ENCODE measurements at regions of chr12 and their contacts with region 1.

Region 1: GRCh38 chr12:40010899-40011774 is 94.7 kb downstream of the SLC2A13 start:
- DNase-seq: peak; percentile 76
- ATAC-seq: peak; percentile 94
- H3K4me3 ChIP-seq: no peak overlapping the region
- H3K27ac ChIP-seq: no peak overlapping the region
- H3K4me1 ChIP-seq: peaks cover 5% of the 10 kb centered on the region
- H3K27me3 ChIP-seq: no peaks in the 10 kb centered on the region
- CTCF ChIP-seq: peak; percentile 93

Region 2: DNA sequence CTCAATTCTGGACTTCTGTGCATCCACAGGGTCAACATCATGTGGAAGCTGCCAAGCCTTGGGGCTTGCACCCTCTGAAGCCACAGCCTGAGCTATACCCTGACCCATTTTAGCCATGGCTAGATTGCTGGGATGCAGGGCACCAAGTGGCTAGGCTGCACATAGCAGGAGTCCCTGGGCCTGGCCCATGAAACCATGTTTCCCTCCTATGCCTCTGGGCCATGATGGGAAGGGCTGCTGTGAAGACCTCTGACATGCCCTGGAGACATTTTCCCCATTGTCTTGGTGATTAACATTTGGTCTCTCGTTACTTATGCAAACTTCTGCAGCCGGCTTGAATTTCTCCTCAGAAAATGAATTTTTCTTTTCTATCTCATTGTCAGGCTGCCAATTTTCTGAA is 484.2 kb before region 1 on chr12:
- CTCF ChIA-PET with region 1: no interaction called
- POLR2A ChIA-PET with region 1: no interaction called
- intact Hi-C with region 1: no loop called
- DNase-seq: no peak
- ATAC-seq: no peak
- H3K4me3 ChIP-seq: no peak overlapping the region
- H3K27ac ChIP-seq: no peak overlapping the region
- H3K4me1 ChIP-seq: no peaks in the 10 kb centered on the region
- H3K27me3 ChIP-seq: no peaks in the 10 kb centered on the region
- CTCF ChIP-seq: no peak

Region 3: GRCh38 chr12:39788235-39788634 is 222.9 kb before region 1 on chr12:
- CTCF ChIA-PET with region 1: no interaction called
- POLR2A ChIA-PET with region 1: no interaction called
- intact Hi-C with region 1: no loop called
- DNase-seq: no peak
- ATAC-seq: no peak; the same call in 1 of the 2 replicates
- H3K4me3 ChIP-seq: no peak overlapping the region
- H3K27ac ChIP-seq: no peak overlapping the region
- H3K4me1 ChIP-seq: no peaks in the 10 kb centered on the region
- H3K27me3 ChIP-seq: no peaks in the 10 kb centered on the region
- CTCF ChIP-seq: no peak

Region 4: GRCh38 chr12:40032433-40033241 is 21.5 kb after region 1 on chr12:
- CTCF ChIA-PET with region 1: interaction called, 3 read pairs
- POLR2A ChIA-PET with region 1: no interaction called
- intact Hi-C with region 1: loop called (anchors 2 kb)
- DNase-seq: no peak
- ATAC-seq: no peak
- H3K4me3 ChIP-seq: no peak overlapping the region
- H3K27ac ChIP-seq: no peak overlapping the region
- H3K4me1 ChIP-seq: no peaks in the 10 kb centered on the region
- H3K27me3 ChIP-seq: no peaks in the 10 kb centered on the region
- CTCF ChIP-seq: no peak

Region 5: DNA sequence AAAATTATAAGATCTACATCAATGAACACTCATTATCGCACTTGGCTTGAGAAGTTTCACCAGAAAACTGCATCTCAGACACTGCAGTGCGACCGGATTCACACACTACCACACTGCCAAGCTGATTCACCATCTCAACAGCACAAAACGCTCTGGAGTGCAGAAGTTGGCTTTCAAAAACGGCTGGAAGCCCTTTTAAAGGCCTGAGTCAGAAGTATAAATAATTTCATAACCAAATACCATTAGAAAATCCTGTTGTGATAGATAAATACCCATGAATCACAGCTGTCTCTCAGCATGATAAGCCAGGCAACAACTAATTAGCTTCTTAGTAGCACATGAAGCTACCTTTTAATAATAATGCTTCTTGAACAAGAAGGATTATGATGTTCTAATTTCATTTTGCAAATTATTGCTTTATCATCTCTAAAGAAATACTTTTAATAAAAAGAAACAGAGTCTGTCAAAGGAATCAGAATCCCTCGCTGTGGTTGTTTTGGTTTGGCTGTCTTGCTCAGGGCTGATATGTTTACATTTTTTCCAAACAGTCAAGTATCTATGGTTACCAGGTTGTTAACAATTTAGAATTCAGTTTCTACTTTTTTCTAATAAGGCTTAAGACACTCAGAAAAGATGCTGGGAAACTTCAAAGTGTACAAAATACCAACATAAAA is 43.6 kb after region 1 on chr12:
- CTCF ChIA-PET with region 1: no interaction called
- POLR2A ChIA-PET with region 1: no interaction called
- intact Hi-C with region 1: loop called (anchors 2 kb)
- DNase-seq: peak; percentile 61
- ATAC-seq: peak; percentile 99
- H3K4me3 ChIP-seq: no peak overlapping the region
- H3K27ac ChIP-seq: no peak overlapping the region
- H3K4me1 ChIP-seq: no peaks in the 10 kb centered on the region
- H3K27me3 ChIP-seq: no peaks in the 10 kb centered on the region
- CTCF ChIP-seq: no peak

Region 6: DNA sequence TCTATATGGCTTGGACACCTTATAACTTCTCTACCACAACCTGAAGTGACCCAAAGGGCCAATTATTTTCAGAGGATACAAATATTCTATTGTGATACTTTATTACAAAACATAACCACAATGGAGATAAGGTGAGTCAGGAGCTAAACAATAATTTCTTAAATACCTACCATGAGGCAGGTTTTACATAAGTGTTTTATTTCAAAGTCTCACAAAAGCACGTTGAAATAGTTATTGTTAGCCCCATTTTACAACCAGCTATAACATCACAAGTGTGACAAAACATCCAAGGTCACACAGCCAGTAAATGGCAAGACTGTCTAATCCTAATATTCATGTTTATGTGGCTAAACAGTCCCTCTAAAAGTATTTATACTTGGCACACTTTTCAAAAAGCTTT is 54.5 kb after region 1 on chr12:
- CTCF ChIA-PET with region 1: no interaction called
- POLR2A ChIA-PET with region 1: interaction called, 15 read pairs
- intact Hi-C with region 1: no loop called
- DNase-seq: no peak
- ATAC-seq: no peak
- H3K4me3 ChIP-seq: no peak overlapping the region
- H3K27ac ChIP-seq: no peak overlapping the region
- H3K4me1 ChIP-seq: no peaks in the 10 kb centered on the region
- H3K27me3 ChIP-seq: no peaks in the 10 kb centered on the region
- CTCF ChIP-seq: no peak

Region 7: GRCh38 chr12:40312982-40313576 is 301.9 kb after region 1 on chr12:
- CTCF ChIA-PET with region 1: no interaction called
- POLR2A ChIA-PET with region 1: no interaction called
- intact Hi-C with region 1: loop called (anchors 5 kb)
- DNase-seq: peak; percentile 38
- ATAC-seq: no peak
- H3K4me3 ChIP-seq: no peak overlapping the region
- H3K27ac ChIP-seq: no peak overlapping the region
- H3K4me1 ChIP-seq: no peaks in the 10 kb centered on the region
- H3K27me3 ChIP-seq: peaks cover 47% of the 10 kb centered on the region
- CTCF ChIP-seq: peak; percentile 60

Region 8: GRCh38 chr12:40903040-40903439 is 891.9 kb after region 1 on chr12:
- CTCF ChIA-PET with region 1: no interaction called
- POLR2A ChIA-PET with region 1: no interaction called
- intact Hi-C with region 1: no loop called
- DNase-seq: no peak
- ATAC-seq: no peak
- H3K4me3 ChIP-seq: no peak overlapping the region
- H3K27ac ChIP-seq: no peak overlapping the region
- H3K4me1 ChIP-seq: peaks cover 9% of the 10 kb centered on the region; the same call in 1 of the 2 replicates
- H3K27me3 ChIP-seq: peaks cover 33% of the 10 kb centered on the region
- CTCF ChIP-seq: no peak

Measured in PC-3 (cell line).